Right ventricle myocardium superior (tissue), 1 donor: ENCODE measurements at regions of chr3 and their contacts with region 1.

Region 1: GRCh38 chr3:46705022-46705530 is 3.9 kb downstream of the TMIE start:
- DNase-seq: peak; percentile 80
- ATAC-seq: peak; percentile 87

Region 2: DNA sequence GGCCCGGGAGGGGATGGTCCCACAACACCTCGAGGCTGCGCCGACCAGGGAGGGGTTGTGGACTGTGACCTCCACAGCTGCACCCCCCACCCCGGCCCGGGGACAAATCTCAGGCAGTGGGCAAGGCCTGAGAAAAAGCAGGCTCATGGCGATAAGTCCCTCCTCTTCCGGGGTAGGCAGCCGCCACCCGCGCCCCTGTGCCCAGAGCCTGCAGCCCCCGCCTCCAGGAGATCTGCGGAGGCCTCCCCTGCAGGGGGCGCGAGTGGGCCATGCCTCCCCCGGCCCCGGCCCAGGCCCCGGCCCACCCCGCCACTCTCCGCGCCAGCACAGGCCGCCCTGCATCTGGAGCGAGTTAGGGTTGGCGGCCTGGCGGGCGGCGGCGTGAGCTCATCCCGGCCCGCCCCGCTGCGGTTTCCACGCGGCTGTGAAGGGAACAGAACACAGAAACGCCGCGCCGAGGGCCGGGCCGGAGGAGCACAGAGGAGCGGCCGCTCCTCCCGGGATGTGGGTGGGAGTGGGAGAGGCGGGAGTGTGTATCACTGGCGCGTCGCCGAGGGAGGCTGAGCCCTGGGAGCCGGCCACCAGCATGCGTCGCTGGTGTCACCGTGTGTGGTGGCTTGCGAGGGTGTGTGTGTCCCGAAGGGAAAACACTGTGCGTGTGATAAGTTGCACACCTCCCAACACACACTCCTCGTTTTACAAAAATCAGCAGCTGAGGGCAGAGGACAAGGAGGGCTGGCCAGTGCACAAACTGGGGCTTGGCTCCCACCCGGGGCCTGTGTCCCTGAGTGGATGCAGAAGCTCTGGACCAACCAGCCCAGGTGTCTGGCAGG is 140.9 kb after region 1 on chr3:
- intact Hi-C with region 1: loop called (anchors 10 kb)
- DNase-seq: peak; percentile 88
- ATAC-seq: peak; percentile 55

Region 3: DNA sequence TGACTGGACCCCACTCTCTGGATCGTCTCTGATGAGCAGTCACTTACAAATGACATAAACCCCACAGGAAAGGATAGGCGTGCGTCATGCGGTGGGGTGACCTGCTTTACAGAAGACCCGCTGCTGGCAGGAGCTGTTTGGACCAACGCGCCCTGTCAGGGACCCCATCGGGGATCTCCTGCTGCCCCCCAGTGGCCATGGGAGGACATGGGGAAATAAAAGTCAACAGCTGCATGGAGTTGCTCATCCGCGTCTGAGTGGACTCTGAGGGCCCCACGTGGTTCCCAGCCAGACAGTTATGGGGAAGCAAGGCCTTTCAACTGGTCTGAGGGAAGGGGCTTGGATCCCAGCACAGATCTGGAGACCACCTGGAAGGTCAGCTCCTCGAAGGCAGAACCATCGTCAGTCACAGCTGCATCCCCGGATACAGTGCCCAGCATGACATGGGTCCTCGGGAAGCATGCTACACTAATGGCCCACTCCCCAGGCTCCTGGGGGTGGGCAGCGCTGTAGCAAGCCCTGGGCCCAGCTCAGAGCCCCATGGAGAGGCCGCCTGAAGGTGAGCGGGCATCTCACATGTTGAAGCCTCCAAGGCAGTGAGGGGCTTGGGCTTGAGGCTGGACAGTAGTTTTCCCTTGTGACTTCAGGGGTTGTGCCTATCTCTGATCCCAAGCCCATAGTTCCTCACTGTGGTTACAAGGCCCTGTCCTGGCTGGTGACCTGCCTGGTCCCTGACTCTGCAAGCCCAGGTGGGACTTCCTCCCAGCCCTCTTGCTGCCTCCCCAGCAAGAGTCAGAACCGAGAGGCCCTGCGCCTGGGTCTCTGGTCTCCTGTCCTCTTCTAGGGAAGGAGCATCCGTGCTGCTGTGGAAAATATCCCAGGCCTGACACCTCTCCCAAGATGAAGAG is 204.7 kb after region 1 on chr3:
- intact Hi-C with region 1: loop called (anchors 5 kb)
- DNase-seq: peak; percentile 89
- ATAC-seq: peak; percentile 86

Region 4: DNA sequence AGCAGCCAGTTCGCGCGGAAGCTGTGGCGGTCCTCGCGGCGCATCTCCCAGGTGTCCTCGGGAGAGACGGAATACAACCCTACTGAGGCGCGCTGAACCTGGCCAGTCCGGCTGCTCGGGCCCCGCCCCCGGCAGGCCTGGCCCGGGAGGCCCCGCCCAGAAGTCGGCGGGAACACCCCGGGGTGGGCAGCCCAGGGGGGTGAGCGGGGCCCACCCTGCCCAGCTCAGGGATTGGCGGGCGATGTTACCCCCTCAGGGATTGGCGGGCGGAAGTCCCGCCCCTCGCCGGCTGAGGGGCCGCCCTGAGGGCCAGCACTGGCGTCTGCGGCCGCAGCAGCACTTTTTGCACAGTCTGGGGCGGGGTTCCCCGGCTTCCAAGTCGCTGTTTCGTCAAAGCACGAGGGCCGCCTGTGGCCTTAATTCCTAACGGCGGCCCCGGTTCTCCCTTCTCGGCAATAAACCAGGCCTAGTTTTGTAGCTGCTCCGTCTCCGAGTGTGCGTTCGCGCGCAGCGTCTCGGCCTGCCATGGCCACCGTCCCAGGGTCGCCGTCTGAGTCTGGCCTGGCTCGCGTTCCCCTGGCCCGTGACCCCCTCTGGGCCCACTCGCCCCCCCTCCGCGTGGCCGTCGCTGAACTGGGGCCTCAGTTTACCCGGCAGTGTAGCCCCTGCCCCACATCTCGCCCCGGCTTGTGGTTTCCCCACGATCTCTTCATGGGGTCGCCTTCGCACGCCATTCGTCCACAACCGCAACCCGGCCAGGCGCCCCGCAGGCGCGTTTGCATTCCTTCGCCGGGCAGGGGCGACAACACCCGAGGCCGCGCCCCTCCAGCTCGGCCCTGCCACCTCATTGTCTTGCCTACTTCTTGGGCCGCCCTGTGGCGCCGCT is 304.4 kb after region 1 on chr3:
- intact Hi-C with region 1: loop called (anchors 10 kb)
- DNase-seq: peak; percentile 92
- ATAC-seq: peak; percentile 96